WTC11 (cell line): ENCODE measurements at regions of chr19 and their contacts with region 1.

Region 1: GRCh38 chr19:12736995-12737834 is at the start of gene GET3:
- DNase-seq: peak; percentile 89
- ATAC-seq: peak; percentile 93
- H3K4me3 Mint-ChIP-seq: peak within 1 kb of the TSS; percentile 100
- H3K27ac Mint-ChIP-seq: peak within 1 kb of the TSS; percentile 99
- H3K4me1 Mint-ChIP-seq: peaks cover 25% of the 10 kb centered on the region
- H3K27me3 Mint-ChIP-seq: no peaks in the 10 kb centered on the region; the same call in 1 of the 2 replicates
- CTCF ChIP-seq: no peak
- total RNA-seq, gene GET3: 104 to 110 TPM (median 104 TPM) in 3 replicates

Region 2: DNA sequence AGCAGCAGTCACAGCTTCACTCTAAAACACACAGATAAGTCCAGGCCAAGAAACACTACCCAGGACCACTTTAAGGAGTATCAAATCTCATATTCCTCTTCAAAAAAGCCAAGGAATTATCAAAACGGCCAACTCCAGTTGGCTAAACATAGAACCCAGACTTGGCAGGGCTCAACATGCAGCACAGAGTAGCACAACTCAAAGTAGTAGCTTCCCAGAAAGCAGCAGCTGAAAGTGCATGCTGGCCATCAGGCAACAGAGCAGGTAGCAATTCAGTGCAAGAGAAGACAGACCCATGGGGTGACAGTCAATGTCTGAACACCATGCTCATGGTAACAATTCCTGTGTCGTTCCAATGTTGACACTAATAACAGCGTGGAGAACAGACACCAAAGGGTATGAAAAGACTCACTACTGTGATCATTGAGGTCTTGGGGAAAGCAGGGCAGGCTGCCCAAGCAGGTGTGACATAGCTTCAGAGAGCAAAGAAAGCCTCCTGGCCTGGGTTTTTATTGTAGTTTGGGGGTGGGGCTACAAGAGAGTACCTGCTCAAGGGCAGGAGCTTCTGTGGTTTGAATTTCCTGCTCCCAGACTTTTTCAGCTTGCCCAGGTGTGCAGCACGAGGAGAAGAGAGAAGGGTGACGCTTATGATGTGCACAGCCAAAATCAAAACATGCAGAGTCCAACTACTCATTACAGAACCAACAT is 258.8 kb before region 1 on chr19:
- CTCF ChIA-PET with region 1: no interaction called
- POLR2A ChIA-PET with region 1: no interaction called
- DNase-seq: no peak
- ATAC-seq: no peak
- H3K4me3 Mint-ChIP-seq: no peak overlapping the region
- H3K27ac Mint-ChIP-seq: no peak overlapping the region
- H3K4me1 Mint-ChIP-seq: peaks cover 13% of the 10 kb centered on the region
- H3K27me3 Mint-ChIP-seq: no peaks in the 10 kb centered on the region
- CTCF ChIP-seq: no peak

Region 3: DNA sequence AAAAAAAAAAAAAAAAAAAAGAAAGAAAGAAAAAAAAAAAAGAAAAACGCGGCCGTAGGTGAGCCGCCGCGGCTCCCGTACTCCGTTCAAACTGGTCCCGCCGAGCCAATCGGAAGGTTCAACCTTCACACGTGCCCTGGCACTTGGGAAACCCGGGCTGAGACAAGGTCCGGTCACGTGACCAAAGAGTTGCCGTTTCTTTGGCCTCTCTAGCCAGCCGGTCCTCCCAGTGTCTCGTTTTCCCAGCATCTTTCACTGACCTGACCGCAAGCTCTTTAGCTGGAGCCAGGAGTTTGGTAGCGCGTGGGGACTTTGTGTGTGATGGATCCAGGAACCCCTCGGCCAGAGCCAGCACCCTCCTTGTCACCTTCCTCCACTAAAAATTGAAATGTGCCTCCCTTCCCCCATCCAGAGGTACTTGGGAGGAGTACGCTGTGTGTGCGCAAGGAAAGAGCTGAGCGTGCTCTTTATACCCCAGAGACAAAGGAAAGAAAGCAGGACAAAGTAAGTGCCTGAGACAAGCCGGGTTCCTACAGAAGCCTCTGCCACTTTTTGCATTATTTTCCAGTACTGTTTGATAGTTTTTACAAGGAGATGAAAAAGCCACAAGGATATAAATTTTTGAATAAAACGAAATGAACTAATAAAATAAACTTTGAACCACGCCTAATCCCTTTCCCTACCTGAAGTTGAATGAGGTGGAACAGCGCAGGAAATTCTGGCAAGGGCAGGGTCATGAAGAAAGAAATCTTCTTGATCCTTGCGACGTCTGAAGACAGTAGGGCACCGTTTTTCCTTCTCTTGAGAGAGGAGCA is 14.4 kb before region 1 on chr19:
- CTCF ChIA-PET with region 1: interaction called, 6 read pairs
- POLR2A ChIA-PET with region 1: interaction called, 44 read pairs
- DNase-seq: peak; percentile 96
- ATAC-seq: peak; percentile 69
- H3K4me3 Mint-ChIP-seq: peak overlapping the region; percentile 93
- H3K27ac Mint-ChIP-seq: peak overlapping the region; percentile 99
- H3K4me1 Mint-ChIP-seq: peaks cover 23% of the 10 kb centered on the region
- H3K27me3 Mint-ChIP-seq: no peaks in the 10 kb centered on the region
- CTCF ChIP-seq: no peak